ENCODE measurements at regions of chr4 and their contacts with region 1.

Region 1: GRCh38 chr4:2963175-2963965 is at the starts of genes GRK4 and NOP14:
- DNase-seq: peak; percentile 98
- H3K4me3 Mint-ChIP-seq: peak within 1 kb of the TSS; percentile 80
- H3K27ac Mint-ChIP-seq: peak within 1 kb of the TSS; percentile 85
- H3K4me1 Mint-ChIP-seq: peaks cover 29% of the 10 kb centered on the region
- H3K27me3 Mint-ChIP-seq: no peaks in the 10 kb centered on the region
- total RNA-seq, gene GRK4: 1.3 to 2.1 TPM
- total RNA-seq, gene NOP14: 48.3 to 55.1 TPM

Region 2: DNA sequence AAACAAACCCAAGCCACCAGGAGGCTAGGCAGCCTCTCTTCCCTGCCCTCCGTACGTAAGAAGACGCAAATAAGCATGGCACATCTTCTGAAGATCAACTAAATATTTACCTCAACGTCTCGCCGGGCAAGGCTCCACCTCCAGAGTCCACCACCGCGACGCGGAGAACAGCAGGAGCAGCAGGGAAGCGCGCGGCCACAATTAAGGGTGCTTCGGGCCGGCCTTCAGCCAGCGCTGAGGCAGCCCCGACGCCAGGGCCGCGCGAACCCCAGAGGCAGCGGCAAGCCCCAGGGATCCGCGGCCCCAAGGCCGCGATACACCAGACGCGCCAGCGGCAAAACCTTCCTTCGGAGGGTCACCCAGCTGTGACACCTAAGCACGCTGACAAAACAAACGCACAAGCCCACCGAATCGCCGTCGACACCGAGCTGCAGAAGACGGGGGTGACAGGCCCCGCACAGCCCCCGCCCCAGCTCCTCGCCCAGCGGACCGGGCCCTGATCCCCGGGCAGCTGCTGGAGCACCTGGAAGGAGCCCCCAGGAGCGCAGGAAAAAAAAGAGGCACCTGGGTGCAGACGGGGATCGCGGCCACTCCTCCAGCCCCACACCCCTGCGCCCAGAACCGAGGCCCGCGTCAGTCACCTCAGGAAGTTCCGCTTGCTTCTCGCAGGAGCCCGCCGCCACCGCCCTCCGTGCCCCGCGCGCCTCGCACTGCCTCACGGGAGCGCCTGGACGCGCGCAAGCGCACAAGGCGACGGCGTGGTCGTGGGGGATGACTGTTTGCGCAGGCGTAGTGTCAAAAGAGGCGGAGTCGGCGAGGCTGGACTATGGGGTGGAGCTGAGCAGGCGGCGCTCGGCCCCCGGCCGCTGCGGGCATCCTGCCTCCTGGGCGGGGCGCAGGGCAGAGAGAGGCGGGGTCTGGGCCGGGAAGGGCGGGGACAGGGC is 721.7 kb before region 1 on chr4 and contains the starts of genes HAUS3 and POLN:
- CTCF ChIA-PET with region 1: no interaction called
- intact Hi-C with region 1: loop called (anchors 1 kb)
- DNase-seq: peak; percentile 99
- H3K4me3 Mint-ChIP-seq: peak within 1 kb of the TSS; percentile 87
- H3K27ac Mint-ChIP-seq: peak within 1 kb of the TSS; percentile 84
- H3K4me1 Mint-ChIP-seq: peaks cover 52% of the 10 kb centered on the region
- H3K27me3 Mint-ChIP-seq: no peaks in the 10 kb centered on the region
- total RNA-seq, gene HAUS3: 18.0 to 18.1 TPM
- total RNA-seq, gene POLN: 0.91 to 1.3 TPM

Region 3: GRCh38 chr4:2468445-2469192 is 494.8 kb before region 1 on chr4 and contains the start of gene RNF4:
- CTCF ChIA-PET with region 1: no interaction called
- intact Hi-C with region 1: loop called (anchors 1 kb)
- DNase-seq: peak; percentile 98
- H3K4me3 Mint-ChIP-seq: peak within 1 kb of the TSS; percentile 97
- H3K27ac Mint-ChIP-seq: peak within 1 kb of the TSS; percentile 98
- H3K4me1 Mint-ChIP-seq: peaks cover 47% of the 10 kb centered on the region
- H3K27me3 Mint-ChIP-seq: no peaks in the 10 kb centered on the region
- total RNA-seq, gene RNF4: 69.2 to 73.1 TPM

Region 4: GRCh38 chr4:2843263-2843940 is 120.0 kb before region 1 on chr4 and contains the start of gene ADD1:
- CTCF ChIA-PET with region 1: no interaction called
- intact Hi-C with region 1: loop called (anchors 2 kb)
- DNase-seq: peak; percentile 92
- H3K4me3 Mint-ChIP-seq: peak within 1 kb of the TSS; percentile 83
- H3K27ac Mint-ChIP-seq: peak within 1 kb of the TSS; percentile 91
- H3K4me1 Mint-ChIP-seq: peaks cover 58% of the 10 kb centered on the region
- H3K27me3 Mint-ChIP-seq: no peaks in the 10 kb centered on the region
- total RNA-seq, gene ADD1: 165 TPM

Region 5: GRCh38 chr4:3037957-3038461 is 74.6 kb after region 1 on chr4:
- CTCF ChIA-PET with region 1: interaction called, 20 read pairs
- intact Hi-C with region 1: loop called (anchors 2 kb)
- DNase-seq: peak; percentile 45
- H3K4me3 Mint-ChIP-seq: peak overlapping the region; percentile 69
- H3K27ac Mint-ChIP-seq: no peak overlapping the region
- H3K4me1 Mint-ChIP-seq: peaks cover 37% of the 10 kb centered on the region
- H3K27me3 Mint-ChIP-seq: no peaks in the 10 kb centered on the region

Region 6: DNA sequence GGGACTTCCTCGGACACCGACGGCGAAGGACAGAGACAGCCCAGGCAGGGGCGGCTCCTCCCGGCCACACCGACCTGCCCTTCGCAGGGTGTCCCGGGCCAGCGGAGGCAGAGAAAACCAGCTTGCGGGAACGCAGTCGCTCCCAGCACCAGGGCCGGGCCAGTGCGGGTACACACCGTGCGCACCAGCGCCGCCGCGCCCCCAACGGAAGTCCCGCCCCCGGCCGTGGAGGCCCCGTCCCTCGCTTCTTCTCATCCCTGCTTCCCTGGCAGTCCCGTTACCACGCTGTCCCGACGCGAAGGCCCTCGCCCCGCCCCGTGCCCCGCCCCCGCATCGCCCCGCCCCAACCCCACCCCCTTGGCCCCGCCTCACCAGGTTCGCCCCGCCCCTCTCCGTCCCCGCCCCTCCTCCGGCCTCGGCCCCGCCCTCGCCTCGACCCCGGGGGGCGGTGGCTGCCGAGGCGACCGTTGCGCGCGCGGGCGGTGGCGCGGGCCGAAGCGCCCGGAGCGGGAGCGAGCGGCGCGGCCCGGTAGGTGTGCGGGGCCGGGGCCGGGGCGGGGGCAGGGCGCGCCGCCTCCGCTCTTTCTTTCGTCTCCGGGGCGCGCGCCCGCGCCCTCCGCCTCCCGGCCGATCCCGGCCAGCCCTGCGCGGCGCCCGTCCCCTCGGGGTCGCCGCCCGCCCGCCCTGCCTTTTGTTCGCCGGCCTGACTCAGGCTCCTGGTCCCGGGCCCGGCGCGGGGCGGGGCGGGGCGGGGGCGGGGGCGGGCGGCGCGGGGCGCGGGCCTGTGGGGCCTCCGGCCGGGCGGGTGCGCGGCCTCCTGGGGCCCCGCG is 329.4 kb after region 1 on chr4 and contains the start of gene RGS12:
- CTCF ChIA-PET with region 1: no interaction called
- intact Hi-C with region 1: loop called (anchors 2 kb)
- DNase-seq: peak; percentile 94
- H3K4me3 Mint-ChIP-seq: peak within 1 kb of the TSS; percentile 93
- H3K27ac Mint-ChIP-seq: no peak within 1 kb of the TSS
- H3K4me1 Mint-ChIP-seq: peaks cover 9% of the 10 kb centered on the region
- H3K27me3 Mint-ChIP-seq: peaks cover under 1% of the 10 kb centered on the region
- total RNA-seq, gene RGS12: 8.7 to 8.9 TPM

Measured in activated naive CD4-positive, alpha-beta T cell treated with anti-CD3 and anti-CD28 coated beads for 36 hours (primary cell).